A549 (cell line): ENCODE measurements at regions of chr11 and their contacts with region 1.

Region 1: DNA sequence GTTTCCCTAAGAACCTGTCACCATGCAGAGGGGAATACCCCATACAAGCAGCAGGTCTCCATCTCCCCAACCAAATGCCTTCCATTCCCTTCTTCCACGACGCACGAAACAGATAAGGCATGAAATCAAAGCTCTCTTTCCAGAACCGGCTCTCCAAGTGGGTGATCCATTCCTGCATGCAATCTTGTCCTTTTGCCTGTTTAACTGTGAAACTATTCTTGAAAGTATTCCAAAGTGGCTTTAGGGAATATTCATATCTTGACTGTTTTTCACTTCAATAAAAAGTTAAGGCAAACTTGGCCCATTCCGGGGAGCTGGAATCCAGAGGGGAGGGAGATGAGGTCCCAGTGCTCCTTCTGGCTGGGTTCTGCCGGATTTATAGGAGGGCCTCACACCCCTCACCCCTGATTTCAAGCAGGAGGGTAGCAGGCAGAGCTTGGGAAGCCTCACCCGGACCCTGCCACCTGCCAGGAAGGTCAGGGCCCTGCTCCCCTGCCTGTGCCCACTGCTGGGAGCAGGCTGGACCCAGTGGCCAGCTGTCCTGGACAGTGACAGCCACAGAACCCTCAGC is 60.9 kb downstream of the SCGB1A1 start:
- DNase-seq: no peak
- ATAC-seq: peak in 1 of 2 experiments; percentile 16; a peak in 1 of 6 replicates
- H3K4me3 ChIP-seq: no peak overlapping the region
- H3K27ac ChIP-seq: peak overlapping the region; percentile 0 to 80
- H3K4me1 ChIP-seq: peaks cover 20% of the 10 kb centered on the region
- CTCF ChIP-seq: no peak
- EP300 ChIP-seq: no peak
- POLR2A ChIP-seq: no peak
- RAD21 ChIP-seq: no peak

Region 2: GRCh38 chr11:62344210-62344609 is 135.5 kb before region 1 on chr11:
- CTCF ChIA-PET with region 1: no interaction called
- POLR2A ChIA-PET with region 1: no interaction called
- DNase-seq: no peak
- ATAC-seq: no peak
- H3K4me3 ChIP-seq: no peak overlapping the region
- H3K27ac ChIP-seq: no peak overlapping the region
- H3K4me1 ChIP-seq: no peaks in the 10 kb centered on the region
- CTCF ChIP-seq: no peak
- EP300 ChIP-seq: no peak
- POLR2A ChIP-seq: no peak
- RAD21 ChIP-seq: no peak

Region 3: DNA sequence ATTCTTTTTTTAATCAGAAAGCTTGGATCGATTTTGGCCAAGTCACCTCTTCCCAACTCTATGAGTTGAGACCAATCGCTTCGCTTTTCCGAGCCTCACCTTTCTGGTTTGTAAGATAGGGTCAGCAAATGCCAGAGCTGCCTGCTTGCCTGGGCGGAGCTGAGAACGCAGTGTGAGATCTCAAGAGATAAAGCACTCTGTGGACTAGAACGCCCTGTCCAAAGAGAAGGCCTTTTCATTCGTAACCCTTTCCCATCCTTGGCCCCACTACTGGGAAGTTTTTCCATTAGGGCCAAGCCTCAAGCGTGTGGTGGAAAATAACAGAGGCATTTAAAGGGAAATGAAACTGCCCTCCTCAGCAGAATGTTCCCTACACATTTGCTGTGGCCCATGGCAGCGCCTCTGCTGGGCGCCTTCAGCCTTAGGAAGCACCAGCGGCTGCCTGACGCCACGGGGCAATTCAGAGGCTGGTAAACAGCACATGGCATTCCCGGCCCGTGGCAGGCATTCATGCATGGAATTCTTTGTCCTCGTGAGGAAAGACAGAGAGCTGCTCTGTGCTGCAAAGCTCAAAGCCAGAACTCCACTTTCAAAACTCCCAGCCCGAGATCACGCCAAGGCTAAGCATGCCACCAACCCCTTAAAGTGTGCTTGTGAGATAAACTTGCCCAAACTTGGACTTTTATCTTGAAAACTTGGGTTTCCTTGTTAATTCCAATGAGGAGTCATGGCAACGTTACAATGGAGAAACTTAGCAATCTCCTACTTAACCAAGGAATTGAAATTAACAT is 28.7 kb after region 1 on chr11:
- CTCF ChIA-PET with region 1: interaction called, 3 read pairs
- POLR2A ChIA-PET with region 1: interaction called, 10 read pairs
- DNase-seq: peak; percentile 88 to 89
- ATAC-seq: peak; percentile 94 to 98
- H3K4me3 ChIP-seq: 0 out of 3 replicates have a peak overlapping the region, but pooled peaks have one; percentile 16
- H3K27ac ChIP-seq: peak overlapping the region; percentile 82 to 86
- H3K4me1 ChIP-seq: peaks cover 63% of the 10 kb centered on the region
- CTCF ChIP-seq: peak; percentile 50
- EP300 ChIP-seq: no peak
- POLR2A ChIP-seq: no peak
- RAD21 ChIP-seq: peak; percentile 22 to 47; a peak in 2 of 5 replicates

Region 4: GRCh38 chr11:62514151-62514550 is 34.4 kb after region 1 on chr11:
- CTCF ChIA-PET with region 1: no interaction called
- POLR2A ChIA-PET with region 1: interaction called, 10 read pairs
- DNase-seq: no peak
- ATAC-seq: peak in 1 of 2 experiments; percentile 14; a peak in 1 of 6 replicates
- H3K4me3 ChIP-seq: no peak overlapping the region
- H3K27ac ChIP-seq: no peak overlapping the region; a peak in 1 of 6 replicates
- H3K4me1 ChIP-seq: peaks cover 28% of the 10 kb centered on the region
- CTCF ChIP-seq: no peak
- EP300 ChIP-seq: no peak
- POLR2A ChIP-seq: no peak
- RAD21 ChIP-seq: no peak